Activated CD4-positive, alpha-beta memory T cell treated with anti-CD3 and anti-CD28 coated beads for 36 hours (primary cell): ENCODE measurements at regions of chr22 and their contacts with region 1.

Region 1: DNA sequence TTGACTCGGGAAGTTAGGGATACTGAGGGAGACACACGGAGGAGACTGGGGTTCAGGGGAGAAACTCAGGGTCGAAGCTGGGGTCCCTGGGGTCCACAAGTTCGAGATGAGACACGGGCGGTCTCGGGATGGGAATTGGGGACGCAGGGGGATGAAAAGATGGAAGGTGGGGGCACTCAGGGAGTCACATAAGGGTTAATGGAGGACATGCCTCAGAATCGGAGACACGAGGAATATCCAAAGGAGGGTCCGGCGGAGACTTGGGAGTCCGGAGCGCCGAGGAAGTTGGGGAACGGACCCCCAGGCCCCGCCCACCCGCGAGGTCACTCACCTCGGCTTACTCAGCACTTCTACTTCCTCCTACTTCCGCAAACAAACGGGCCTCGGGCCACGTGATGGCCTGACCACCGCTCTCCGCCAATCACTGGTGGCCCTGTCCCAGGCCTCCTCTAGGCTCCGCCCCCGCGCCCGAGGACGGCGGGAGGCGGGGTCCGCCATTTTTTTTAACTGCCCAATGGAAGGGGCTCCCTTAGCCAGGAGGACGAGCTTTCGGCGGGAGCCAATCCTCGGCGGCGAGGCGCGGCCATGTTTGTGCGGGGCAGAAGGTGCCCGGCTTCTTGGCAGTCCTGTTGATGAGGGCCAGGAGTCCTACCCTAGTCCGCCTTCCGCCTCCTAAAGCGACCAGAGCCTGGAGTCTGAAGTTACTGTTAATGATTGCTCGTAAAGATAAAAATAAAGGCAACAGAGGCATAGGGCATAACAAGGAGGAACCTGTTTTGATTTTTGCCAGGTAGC is at the start of gene PLA2G6:
- DNase-seq: peak; percentile 99
- H3K4me3 Mint-ChIP-seq: peak within 1 kb of the TSS; percentile 86
- H3K27ac Mint-ChIP-seq: peak within 1 kb of the TSS; percentile 99
- H3K4me1 Mint-ChIP-seq: peaks cover 44% of the 10 kb centered on the region
- H3K27me3 Mint-ChIP-seq: no peaks in the 10 kb centered on the region
- total RNA-seq, gene PLA2G6: 63.7 to 69.5 TPM

Region 2: DNA sequence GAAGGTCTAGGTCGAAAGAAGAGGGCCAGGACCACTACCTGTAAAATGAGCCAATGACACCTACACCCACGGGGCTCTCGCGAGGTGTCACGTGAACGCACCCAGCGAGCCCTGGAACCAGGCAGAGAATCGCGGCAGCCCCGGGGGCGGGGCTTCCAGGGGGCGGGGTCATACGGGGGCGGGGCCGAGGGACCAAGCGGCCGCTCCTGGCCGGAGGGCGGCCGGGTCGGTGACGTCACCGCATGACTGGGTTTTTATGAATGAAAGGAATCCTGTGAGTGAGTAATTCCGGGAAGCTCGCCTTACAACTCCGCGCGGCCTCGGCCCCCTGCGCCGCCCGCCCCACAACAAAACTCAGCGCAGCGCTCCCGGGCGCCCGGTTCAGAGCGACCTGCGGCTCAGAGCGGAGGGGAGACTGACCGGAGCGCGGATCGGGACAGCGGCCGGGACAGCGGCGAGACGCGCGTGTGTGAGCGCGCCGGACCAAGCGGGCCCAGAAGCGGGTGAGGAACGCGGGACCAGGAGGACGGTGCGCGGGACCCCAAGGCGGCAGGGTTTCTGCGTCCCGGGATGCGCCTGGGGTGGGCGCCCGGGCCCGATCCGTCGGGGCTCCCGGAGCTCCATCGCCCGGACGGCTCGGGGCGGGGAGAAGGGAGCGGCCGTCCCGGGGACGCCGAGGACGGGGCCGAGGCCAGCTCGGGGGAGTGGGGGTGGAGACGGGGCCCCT is 20.2 kb after region 1 on chr22 and contains the start of gene MAFF:
- CTCF ChIA-PET with region 1: interaction called, 7 read pairs
- POLR2A ChIA-PET with region 1: interaction called, 10 read pairs
- intact Hi-C with region 1: loop called (anchors 1 kb)
- DNase-seq: peak; percentile 98
- H3K4me3 Mint-ChIP-seq: peak within 1 kb of the TSS; percentile 83
- H3K27ac Mint-ChIP-seq: peak within 1 kb of the TSS; percentile 84
- H3K4me1 Mint-ChIP-seq: peaks cover 37% of the 10 kb centered on the region
- H3K27me3 Mint-ChIP-seq: no peaks in the 10 kb centered on the region
- total RNA-seq, gene MAFF: 15.5 to 15.9 TPM

Region 3: GRCh38 chr22:38214256-38215056 is 32.8 kb after region 1 on chr22:
- CTCF ChIA-PET with region 1: interaction called, 4 read pairs
- POLR2A ChIA-PET with region 1: interaction called, 3 read pairs
- intact Hi-C with region 1: loop called (anchors 5 kb)
- DNase-seq: peak; percentile 81
- H3K4me3 Mint-ChIP-seq: no peak overlapping the region
- H3K27ac Mint-ChIP-seq: no peak overlapping the region
- H3K4me1 Mint-ChIP-seq: peaks cover 46% of the 10 kb centered on the region
- H3K27me3 Mint-ChIP-seq: no peaks in the 10 kb centered on the region